ENCODE measurements at regions of chr7 and their contacts with region 1.

Region 1: GRCh38 chr7:98400542-98401340 is at the start of gene BAIAP2L1:
- DNase-seq: peak; percentile 67 to 94
- ATAC-seq: peak; percentile 84 to 89
- H3K4me3 ChIP-seq: peak within 1 kb of the TSS; percentile 89
- H3K27ac ChIP-seq: peak within 1 kb of the TSS; percentile 98
- H3K4me1 ChIP-seq: peaks cover 31% of the 10 kb centered on the region
- CTCF ChIP-seq: no peak
- EP300 ChIP-seq: no peak
- POLR2A ChIP-seq: peak; percentile 57
- RAD21 ChIP-seq: peak in 1 of 2 experiments; percentile 85
- polyA plus RNA-seq, gene BAIAP2L1: 79.1 and 89.3 TPM in 2 replicates

Region 2: DNA sequence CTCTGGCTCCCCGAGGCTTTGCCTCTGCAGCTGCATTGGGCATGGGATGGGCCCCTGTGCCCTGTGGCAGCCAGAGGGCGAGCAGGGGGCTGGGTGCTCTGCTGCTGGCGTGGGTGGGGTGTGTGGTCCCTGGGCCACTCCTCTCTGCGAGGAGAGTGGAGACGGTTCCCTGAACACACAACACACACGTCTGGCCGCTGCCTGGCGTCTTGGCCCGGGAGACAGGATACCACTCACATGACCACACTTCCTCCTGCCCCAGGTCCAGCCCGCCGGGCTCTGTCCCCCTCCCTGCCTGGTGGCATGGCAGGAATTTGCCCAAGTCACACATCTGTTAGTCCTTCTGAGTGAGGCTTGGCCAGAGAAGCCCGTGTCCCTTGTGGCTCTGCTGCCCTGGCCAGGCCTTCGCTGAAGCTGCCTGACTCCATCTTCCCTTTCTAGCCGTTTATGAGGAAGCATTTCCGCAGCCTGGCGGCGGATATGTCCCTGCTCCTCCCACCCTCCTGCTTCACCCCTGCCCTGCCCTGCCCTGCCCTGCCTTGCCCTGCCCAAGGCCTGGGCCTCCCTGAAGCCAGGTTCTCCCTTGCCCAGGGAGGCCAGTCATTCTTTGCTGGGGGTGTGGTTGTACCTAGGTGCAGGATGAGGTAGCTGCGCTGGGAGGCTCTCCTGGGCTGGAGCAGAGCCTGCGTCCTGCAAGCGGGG is 116.3 kb before region 1 on chr7:
- CTCF ChIA-PET with region 1: interaction called, 11 read pairs
- POLR2A ChIA-PET with region 1: no interaction called
- DNase-seq: peak in 1 of 2 experiments; percentile 65
- ATAC-seq: peak in 1 of 2 experiments; percentile 37; a peak in 3 of 6 replicates
- H3K4me3 ChIP-seq: peak overlapping the region; percentile 98
- H3K27ac ChIP-seq: peak overlapping the region; percentile 98 to 99
- H3K4me1 ChIP-seq: peaks cover 64% of the 10 kb centered on the region
- CTCF ChIP-seq: no peak
- EP300 ChIP-seq: no peak
- POLR2A ChIP-seq: no peak
- RAD21 ChIP-seq: no peak

Region 3: DNA sequence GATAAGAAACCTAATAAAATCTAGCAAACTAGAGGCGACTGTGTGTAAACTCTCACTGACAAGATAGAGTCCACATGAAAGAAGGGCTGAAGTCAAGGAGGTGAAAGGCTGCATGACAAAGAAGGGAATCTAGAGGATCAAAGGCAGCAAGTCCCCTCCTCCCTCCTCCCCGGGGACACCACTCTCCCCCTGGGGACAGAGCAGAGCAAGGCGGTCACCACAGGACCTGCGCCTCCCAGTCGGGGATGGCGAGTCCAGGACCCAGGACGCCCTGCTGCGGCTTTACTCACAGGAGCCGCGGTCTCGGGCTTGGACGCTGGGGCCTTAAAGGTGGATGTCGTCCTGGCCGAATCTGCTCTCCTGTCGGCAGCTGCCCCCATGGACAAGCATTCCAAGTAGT is 96.8 kb before region 1 on chr7:
- CTCF ChIA-PET with region 1: interaction called, 45 read pairs
- POLR2A ChIA-PET with region 1: interaction called, 7 read pairs
- DNase-seq: no peak
- ATAC-seq: no peak
- H3K4me3 ChIP-seq: no peak overlapping the region
- H3K27ac ChIP-seq: no peak overlapping the region
- H3K4me1 ChIP-seq: no peaks in the 10 kb centered on the region
- CTCF ChIP-seq: no peak
- EP300 ChIP-seq: no peak
- POLR2A ChIP-seq: no peak
- RAD21 ChIP-seq: no peak

Region 4: DNA sequence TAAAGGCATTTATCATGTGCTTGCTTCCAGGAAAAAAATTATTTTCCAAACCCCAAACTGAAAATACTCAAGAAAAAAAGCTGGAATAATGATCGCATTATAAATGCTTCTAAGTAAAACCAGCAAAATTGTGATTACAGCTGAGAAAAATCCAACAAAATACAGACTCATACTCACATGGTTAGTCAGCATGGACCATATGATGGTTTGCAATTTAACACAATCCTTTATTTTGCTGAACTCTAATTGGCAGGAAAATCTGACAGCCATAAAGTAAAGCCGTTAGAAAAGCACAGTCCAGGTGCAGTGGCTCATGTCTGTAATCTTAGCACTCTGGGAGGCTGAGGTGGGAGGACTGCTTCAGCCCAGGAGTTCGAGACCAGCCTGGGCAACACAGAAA is 59.6 kb before region 1 on chr7:
- CTCF ChIA-PET with region 1: interaction called, 10 read pairs
- POLR2A ChIA-PET with region 1: no interaction called
- DNase-seq: no peak
- ATAC-seq: no peak
- H3K4me3 ChIP-seq: no peak overlapping the region
- H3K27ac ChIP-seq: no peak overlapping the region
- H3K4me1 ChIP-seq: peaks cover 24% of the 10 kb centered on the region
- CTCF ChIP-seq: no peak
- EP300 ChIP-seq: no peak
- POLR2A ChIP-seq: no peak
- RAD21 ChIP-seq: no peak

Region 5: DNA sequence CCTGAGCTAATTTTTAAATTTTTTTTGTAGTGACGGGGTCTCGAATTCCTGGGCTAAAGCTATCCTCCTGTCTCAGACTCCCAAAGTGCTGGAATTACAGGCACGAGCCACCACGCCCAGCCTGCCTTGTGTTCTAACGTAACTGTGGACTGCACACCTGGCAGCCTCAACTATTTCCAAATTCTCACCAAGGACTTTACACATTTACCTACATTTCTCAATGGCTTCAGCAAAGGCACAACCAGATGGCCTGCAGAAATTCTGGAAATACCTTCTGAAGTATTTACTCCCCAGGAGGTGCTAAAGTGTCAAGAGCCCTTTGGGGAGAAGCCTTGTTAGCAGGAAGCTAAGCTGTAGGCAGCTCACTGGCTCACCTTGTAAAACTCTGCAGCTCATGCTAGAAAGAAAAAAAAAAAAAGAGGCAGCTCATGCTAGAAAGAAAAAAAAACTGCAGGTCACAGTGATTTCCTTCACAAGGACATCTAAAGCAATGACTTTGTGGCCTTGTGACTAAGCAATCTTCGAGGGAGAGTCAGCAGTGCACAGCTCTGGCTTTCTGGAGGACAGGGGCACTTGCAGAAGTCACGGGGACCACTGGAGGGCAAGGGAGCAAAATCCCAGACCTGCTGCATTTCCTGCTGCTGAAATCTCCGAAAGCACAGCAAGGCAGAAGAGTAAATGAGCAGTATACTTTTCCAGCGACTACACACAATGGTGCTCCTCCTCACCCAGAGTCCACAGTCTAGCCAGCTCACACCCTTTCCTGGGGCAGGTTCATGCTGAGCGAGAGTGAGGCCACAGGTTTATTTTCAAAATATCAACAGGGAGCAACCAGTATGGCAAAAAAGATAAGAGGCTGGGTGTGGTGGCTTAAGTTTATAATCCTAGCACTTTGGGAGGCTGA is 40.3 kb before region 1 on chr7:
- CTCF ChIA-PET with region 1: interaction called, 31 read pairs
- POLR2A ChIA-PET with region 1: interaction called, 14 read pairs
- DNase-seq: peak; percentile 61 to 87
- ATAC-seq: peak; percentile 80 to 90
- H3K4me3 ChIP-seq: no peak overlapping the region
- H3K27ac ChIP-seq: peak overlapping the region; percentile 72 to 95
- H3K4me1 ChIP-seq: peaks cover 66% of the 10 kb centered on the region
- CTCF ChIP-seq: no peak; the same call in 2 of the 3 replicates
- EP300 ChIP-seq: no peak
- POLR2A ChIP-seq: no peak
- RAD21 ChIP-seq: peak; percentile 19 to 43; a peak in 1 of 5 replicates

Region 6: GRCh38 chr7:98387544-98388224 is 13.1 kb before region 1 on chr7:
- CTCF ChIA-PET with region 1: interaction called, 10 read pairs
- POLR2A ChIA-PET with region 1: interaction called, 5 read pairs
- DNase-seq: no peak
- ATAC-seq: no peak
- H3K4me3 ChIP-seq: no peak overlapping the region
- H3K27ac ChIP-seq: no peak overlapping the region
- H3K4me1 ChIP-seq: peaks cover 5% of the 10 kb centered on the region; the same call in 1 of the 3 replicates
- CTCF ChIP-seq: no peak
- EP300 ChIP-seq: no peak
- POLR2A ChIP-seq: no peak
- RAD21 ChIP-seq: no peak

Region 7: GRCh38 chr7:98841179-98841997 is 440.6 kb after region 1 on chr7:
- CTCF ChIA-PET with region 1: interaction called, 10 read pairs
- POLR2A ChIA-PET with region 1: no interaction called
- DNase-seq: peak; percentile 59 to 76
- ATAC-seq: peak; percentile 68 to 82
- H3K4me3 ChIP-seq: no peak overlapping the region
- H3K27ac ChIP-seq: peak overlapping the region in 1 of 2 experiments; percentile 54; a peak in 3 of 6 replicates
- H3K4me1 ChIP-seq: peaks cover 13% of the 10 kb centered on the region; the same call in 2 of the 3 replicates
- CTCF ChIP-seq: peak; percentile 96
- EP300 ChIP-seq: no peak
- POLR2A ChIP-seq: no peak
- RAD21 ChIP-seq: peak; percentile 99

Region 8: DNA sequence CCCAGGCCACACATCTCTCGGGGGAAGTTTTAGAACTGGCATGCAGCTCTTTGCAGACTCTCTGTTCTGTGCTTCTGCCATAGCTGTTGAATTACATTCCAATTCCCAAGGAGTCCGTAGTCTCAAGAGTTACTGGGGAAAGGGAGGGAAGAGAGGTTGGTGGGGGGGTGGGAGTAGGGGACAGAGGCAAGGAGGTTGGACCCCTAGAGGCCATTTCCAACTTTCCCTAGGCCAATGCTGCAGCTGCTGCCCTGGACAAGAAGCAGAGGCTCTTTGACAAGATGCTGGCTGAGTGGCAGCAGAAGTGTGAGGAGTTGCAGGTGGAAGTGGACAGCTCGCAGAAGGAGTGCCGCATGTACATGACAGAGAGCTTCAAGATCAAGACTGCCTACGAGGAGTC is 895.7 kb after region 1 on chr7:
- CTCF ChIA-PET with region 1: no interaction called
- POLR2A ChIA-PET with region 1: no interaction called
- DNase-seq: no peak
- ATAC-seq: peak; percentile 39 to 54; a peak in 4 of 6 replicates
- H3K4me3 ChIP-seq: no peak overlapping the region
- H3K27ac ChIP-seq: no peak overlapping the region
- H3K4me1 ChIP-seq: no peaks in the 10 kb centered on the region
- CTCF ChIP-seq: no peak
- EP300 ChIP-seq: no peak
- POLR2A ChIP-seq: no peak
- RAD21 ChIP-seq: no peak